ENCODE measurements at regions of chr7 and their contacts with region 1.

Region 1: GRCh38 chr7:27196287-27196767 is 3.6 kb downstream of the HOXA13 start:
- DNase-seq: peak; percentile 93
- H3K4me3 Mint-ChIP-seq: no peak overlapping the region
- H3K27ac Mint-ChIP-seq: no peak overlapping the region
- H3K4me1 Mint-ChIP-seq: peaks cover 6% of the 10 kb centered on the region
- H3K27me3 Mint-ChIP-seq: peaks cover 75% of the 10 kb centered on the region

Region 2: DNA sequence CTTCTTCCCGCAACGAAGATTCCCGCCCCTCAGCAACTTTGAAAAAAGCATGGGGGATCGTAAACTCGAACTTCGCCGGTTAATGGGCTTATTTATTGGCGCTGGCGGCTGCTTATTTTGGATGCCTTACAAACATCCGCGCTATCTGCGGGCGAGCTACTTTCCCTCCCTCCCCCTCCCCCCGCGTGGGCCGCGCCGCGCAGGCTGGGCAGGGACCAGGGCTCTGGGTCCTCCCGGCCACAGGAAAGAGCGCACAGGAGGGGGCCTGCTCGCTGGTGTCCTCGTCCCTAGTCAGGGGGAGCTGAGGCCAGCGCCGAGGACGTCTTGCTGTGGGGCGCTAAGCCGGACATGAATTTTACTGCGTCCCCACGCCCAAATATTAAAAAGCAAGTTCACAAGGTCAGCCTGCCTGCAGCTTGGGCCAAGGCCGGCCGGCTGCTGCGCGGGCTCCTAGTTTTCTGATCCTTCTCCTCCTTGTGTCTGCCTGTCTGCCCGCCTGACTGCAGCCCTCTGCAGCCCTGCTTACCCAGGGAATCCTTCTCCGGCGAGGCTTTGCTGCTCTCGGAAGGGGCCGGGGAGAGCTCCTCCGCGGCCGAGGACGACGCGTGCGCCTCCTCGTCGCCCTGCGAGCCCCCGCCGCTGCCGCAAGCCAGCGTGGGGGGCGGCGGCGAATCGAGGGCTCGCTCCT is 23.4 kb before region 1 on chr7:
- intact Hi-C with region 1: loop called (anchors 2 kb)
- DNase-seq: no peak
- H3K4me3 Mint-ChIP-seq: no peak overlapping the region
- H3K27ac Mint-ChIP-seq: no peak overlapping the region
- H3K4me1 Mint-ChIP-seq: peaks cover 5% of the 10 kb centered on the region
- H3K27me3 Mint-ChIP-seq: peaks cover 60% of the 10 kb centered on the region

Region 3: DNA sequence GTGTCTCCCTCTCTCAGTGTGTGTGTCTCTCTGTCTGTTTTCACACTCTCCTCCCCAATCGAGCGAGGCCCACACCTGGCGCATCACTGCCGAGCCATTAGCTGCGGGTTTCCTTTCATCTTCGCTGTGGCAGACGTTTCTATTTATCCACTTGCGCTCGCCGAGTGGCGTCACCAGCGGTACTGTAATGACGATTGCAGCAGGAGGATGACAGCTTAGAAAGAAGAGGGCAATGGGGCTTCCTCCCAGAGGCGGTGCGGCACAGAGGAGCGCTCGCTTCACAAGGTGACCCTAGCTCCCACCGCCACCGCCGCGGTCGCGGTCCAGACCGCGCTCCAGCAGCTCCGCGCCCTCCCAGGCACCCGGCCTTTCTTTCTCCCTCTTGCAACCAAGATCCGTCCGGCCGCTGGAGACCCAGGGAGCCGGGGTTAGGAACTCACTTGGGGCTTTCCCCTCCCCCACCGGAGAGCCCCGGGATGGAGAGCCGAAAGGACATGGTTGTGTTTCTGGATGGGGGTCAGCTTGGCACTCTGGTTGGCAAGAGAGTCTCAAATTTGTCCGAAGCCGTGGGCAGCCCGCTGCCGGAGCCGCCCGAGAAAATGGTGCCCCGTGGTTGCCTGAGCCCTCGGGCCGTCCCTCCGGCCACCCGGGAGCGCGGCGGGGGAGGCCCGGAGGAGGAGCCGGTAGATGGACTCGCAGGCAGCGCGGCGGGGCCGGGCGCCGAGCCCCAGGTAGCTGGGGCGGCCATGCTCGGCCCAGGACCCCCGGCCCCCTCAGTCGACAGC is 46.4 kb after region 1 on chr7 and contains the start of gene EVX1:
- intact Hi-C with region 1: loop called (anchors 2 kb)
- DNase-seq: no peak
- H3K4me3 Mint-ChIP-seq: no peak within 1 kb of the TSS
- H3K27ac Mint-ChIP-seq: peak within 1 kb of the TSS; percentile 16
- H3K4me1 Mint-ChIP-seq: no peaks in the 10 kb centered on the region
- H3K27me3 Mint-ChIP-seq: peaks cover 83% of the 10 kb centered on the region
- total RNA-seq, gene EVX1: not detected in 2 replicates

Region 4: DNA sequence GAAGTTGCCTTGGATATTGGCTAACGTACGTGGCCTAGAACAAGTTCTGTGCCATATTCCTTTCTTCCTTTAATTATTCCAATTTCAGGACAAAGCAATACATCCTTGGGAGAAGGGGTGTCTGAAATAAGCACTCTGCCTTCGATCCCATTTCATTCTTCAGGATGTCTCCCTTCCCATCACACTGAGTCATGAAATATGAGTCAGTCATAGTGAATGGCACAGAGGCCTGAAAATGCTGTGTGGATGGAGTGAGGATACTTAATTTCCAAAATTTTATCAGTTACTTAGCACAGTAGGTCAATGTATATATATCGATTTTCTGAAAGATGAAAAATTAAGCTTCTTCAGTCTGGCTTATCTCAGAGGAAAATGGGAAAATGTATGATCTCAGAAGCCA is 65.8 kb after region 1 on chr7:
- intact Hi-C with region 1: no loop called
- DNase-seq: no peak
- H3K4me3 Mint-ChIP-seq: no peak overlapping the region
- H3K27ac Mint-ChIP-seq: no peak overlapping the region
- H3K4me1 Mint-ChIP-seq: no peaks in the 10 kb centered on the region
- H3K27me3 Mint-ChIP-seq: peaks cover 2% of the 10 kb centered on the region

Region 5: DNA sequence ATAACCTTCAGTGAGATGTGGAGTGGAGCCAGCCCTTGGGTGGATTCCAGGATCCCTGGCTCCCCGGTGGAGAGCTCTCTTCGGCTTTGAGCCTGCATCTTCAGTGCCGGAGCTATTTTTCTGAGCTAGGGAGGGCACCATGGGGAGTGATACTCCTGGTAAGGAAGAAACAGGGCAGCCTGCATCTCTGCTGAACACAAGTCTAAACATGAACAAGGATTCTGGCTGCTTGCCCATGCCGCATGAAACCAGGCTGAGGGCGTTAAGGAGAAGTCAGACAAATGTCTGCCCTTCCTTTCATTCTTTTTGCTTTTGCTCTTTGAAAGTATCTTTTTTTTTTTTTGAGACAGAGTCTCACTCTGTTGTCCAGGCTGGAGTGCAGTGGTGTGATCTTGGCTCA is 106.7 kb after region 1 on chr7:
- intact Hi-C with region 1: no loop called
- DNase-seq: no peak
- H3K4me3 Mint-ChIP-seq: no peak overlapping the region
- H3K27ac Mint-ChIP-seq: no peak overlapping the region
- H3K4me1 Mint-ChIP-seq: no peaks in the 10 kb centered on the region
- H3K27me3 Mint-ChIP-seq: peaks cover 3% of the 10 kb centered on the region

Region 6: GRCh38 chr7:27784393-27785053 is 588.2 kb after region 1 on chr7:
- intact Hi-C with region 1: loop called (anchors 5 kb)
- DNase-seq: peak; percentile 71
- H3K4me3 Mint-ChIP-seq: no peak overlapping the region
- H3K27ac Mint-ChIP-seq: no peak overlapping the region
- H3K4me1 Mint-ChIP-seq: peaks cover 7% of the 10 kb centered on the region
- H3K27me3 Mint-ChIP-seq: no peaks in the 10 kb centered on the region

Region 7: DNA sequence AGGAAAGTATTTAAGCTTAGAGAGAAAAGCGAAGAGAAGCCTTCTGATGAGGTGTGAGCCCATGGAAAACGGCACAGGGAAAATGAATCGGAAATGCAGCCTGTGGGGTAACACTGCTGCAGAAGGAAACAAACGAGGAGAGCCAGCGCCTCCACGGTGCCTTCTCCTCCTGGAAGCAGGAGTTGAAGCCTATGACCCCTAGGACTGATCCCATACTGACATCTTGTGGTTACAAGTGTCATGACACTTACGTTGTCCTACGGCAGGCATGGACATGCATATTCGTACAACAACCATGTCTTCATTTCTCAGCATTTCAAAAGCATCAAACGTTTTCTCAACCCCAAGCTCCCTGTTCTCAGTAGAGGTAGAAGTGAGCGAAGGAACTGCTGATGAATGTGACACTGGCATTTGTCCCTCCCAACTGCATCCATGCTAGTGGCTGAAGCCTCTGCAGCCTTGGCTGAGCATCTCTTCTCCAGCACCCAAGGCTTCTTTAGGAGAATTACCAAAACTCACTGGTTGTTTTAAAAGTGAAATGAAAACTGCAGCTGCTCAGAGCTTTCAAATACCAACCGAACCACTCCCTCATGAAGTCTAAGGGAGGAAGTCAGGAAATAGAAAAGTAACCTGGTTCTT is 824.1 kb after region 1 on chr7:
- intact Hi-C with region 1: loop called (anchors 1 kb)
- DNase-seq: peak; percentile 83
- H3K4me3 Mint-ChIP-seq: no peak overlapping the region
- H3K27ac Mint-ChIP-seq: no peak overlapping the region
- H3K4me1 Mint-ChIP-seq: peaks cover 2% of the 10 kb centered on the region
- H3K27me3 Mint-ChIP-seq: peaks cover 9% of the 10 kb centered on the region

Region 8: DNA sequence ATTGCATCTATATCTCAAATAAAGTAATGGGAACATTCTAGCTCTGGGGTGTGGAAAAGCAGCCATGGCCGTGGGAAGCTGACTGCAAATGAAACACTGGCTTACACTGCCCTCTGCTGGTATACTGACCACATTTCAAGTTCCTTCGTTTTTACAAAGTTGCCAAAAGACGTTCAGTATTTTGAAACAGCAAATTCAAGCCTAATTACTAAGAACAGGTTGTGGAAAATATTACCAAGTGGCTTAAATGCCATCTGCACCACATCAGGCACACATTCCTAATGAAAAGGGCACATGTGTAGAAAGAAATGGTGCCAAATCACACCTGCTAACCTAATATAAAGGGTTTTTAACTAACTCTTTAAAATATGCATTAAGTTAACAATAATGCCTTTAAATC is 900.4 kb after region 1 on chr7:
- intact Hi-C with region 1: loop called (anchors 5 kb)
- DNase-seq: peak; percentile 76
- H3K4me3 Mint-ChIP-seq: no peak overlapping the region
- H3K27ac Mint-ChIP-seq: no peak overlapping the region
- H3K4me1 Mint-ChIP-seq: no peaks in the 10 kb centered on the region
- H3K27me3 Mint-ChIP-seq: peaks cover 2% of the 10 kb centered on the region

Measured in activated CD4-positive, alpha-beta T cell treated with anti-CD3 and anti-CD28 coated beads, Interleukin-2, amount 10 ng/mL, durations not matched to agents 24 days and 14 days (primary cell).